ENCODE measurements at regions of chr6 and their contacts with region 1.

Region 1: GRCh38 chr6:100099189-100100074 is 105.4 kb upstream of the MCHR2 start:
- DNase-seq: no peak
- H3K4me3 ChIP-seq: no peak overlapping the region
- CTCF ChIP-seq: no peak
- POLR2A ChIP-seq: no peak

Region 2: GRCh38 chr6:99879431-99879830 is 220.0 kb before region 1 on chr6:
- intact Hi-C with region 1: loop called (anchors 10 kb)
- DNase-seq: no peak
- H3K4me3 ChIP-seq: no peak overlapping the region
- CTCF ChIP-seq: no peak
- POLR2A ChIP-seq: no peak

Region 3: GRCh38 chr6:100512203-100512862 is 412.9 kb after region 1 on chr6:
- intact Hi-C with region 1: no loop called
- DNase-seq: no peak
- H3K4me3 ChIP-seq: no peak overlapping the region
- CTCF ChIP-seq: no peak
- POLR2A ChIP-seq: no peak

Region 4: GRCh38 chr6:100846276-100846675 is 746.8 kb after region 1 on chr6:
- intact Hi-C with region 1: no loop called
- DNase-seq: no peak
- H3K4me3 ChIP-seq: no peak overlapping the region
- CTCF ChIP-seq: no peak
- POLR2A ChIP-seq: no peak